Naive thymus-derived CD4-positive, alpha-beta T cell (primary cell): ENCODE measurements at regions of chr15 and their contacts with region 1.

Region 1: DNA sequence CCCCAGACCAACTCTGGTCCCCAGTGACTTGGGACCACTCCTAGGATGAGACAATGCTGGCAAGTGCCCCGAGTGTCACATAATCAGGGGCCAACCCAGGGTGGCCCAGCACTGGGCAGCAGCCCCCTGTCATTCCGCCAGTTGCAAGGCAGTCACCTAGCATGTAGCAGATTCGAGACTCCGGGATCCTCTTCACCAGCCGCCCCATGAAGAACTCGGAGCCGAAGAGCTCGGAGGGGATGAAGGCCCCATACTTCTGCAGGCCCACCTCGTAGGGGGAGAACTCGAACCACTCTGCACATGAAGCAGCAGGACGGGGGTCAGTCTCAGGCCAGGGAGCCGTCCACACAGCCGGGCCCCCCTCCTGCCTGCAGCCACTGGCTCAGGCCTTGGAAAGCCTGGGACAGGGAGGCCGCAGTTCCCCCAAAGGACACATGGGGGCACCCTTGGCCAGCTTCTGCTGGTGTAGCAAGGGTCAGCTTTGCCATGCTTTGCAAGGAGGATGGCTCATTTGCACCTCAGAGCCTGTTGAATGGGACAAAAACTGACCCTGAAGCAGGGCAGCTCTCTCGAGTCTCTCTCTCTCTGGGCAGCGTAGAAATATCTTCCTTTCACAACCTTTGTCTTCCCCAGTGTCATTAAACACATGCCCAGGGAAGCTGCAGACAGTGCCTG is 17.0 kb upstream of the EHD4 start:
- DNase-seq: peak; percentile 54 to 88 (median 74)
- ATAC-seq: peak; percentile 94
- H3K4me3 ChIP-seq: no peak overlapping the region
- H3K4me3 Mint-ChIP-seq: no peak overlapping the region
- H3K27ac ChIP-seq: no peak overlapping the region
- H3K27ac Mint-ChIP-seq: no peak overlapping the region
- H3K4me1 ChIP-seq: no peaks in the 10 kb centered on the region
- H3K4me1 Mint-ChIP-seq: peaks cover 0 to 2% (median 0%) of the 10 kb centered on the region in 7 donors
- H3K27me3 ChIP-seq: no peaks in the 10 kb centered on the region
- H3K27me3 Mint-ChIP-seq: no peaks in the 10 kb centered on the region

Region 2: DNA sequence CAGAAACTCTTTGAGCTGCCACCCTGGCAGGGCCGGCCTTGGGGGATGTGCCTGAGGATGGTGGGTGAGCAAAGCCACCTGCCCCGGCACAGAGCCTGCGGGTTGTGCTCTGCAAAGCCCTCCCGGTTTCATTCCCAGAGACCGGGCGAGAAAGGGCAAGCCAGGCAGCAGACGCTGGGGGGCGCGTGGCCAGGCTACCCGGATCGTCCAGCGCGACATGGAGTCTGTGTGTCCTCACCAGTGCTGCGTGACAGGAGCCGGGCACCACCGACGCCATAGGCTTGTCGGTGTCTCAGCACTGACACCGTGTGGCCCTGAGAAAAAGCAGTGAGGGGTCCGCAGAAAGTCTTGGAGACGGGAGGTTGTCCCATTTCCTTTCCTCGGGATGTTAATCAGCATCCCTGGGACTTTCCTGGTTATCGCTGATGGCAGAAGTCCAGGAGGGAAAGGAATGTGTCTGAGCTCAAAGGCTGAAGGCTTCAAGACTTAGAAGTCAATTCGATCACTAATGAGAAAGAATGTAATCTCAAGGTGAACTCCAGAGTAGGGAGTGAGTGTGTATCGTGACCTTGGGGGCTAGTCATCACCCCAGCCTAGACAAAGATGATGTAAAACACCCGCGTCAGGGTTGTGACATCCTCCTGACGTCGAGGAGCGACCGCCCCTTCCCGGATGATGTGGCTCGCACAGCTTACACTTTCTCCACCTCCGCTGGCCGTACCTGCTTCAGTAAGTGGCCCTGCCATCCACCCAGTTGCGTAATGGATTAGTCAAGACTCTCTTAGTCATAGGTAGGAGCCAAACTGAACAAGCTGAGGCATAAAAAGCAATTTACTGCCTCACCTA is 67.8 kb after region 1 on chr15:
- CTCF ChIA-PET with region 1: interaction called, 7 read pairs
- POLR2A ChIA-PET with region 1: no interaction called
- intact Hi-C with region 1: loop called (anchors 1 kb)
- DNase-seq: peak; percentile 19 to 56 (median 30)
- ATAC-seq: peak; percentile 81
- H3K4me3 ChIP-seq: peak overlapping the region; percentile 23
- H3K4me3 Mint-ChIP-seq: peak overlapping the region; percentile 39 to 79 (median 60)
- H3K27ac ChIP-seq: no peak overlapping the region
- H3K27ac Mint-ChIP-seq: peak overlapping the region in 4 of 9 donors; percentile 24 to 77 (median 35)
- H3K4me1 ChIP-seq: no peaks in the 10 kb centered on the region
- H3K4me1 Mint-ChIP-seq: peaks cover 3 to 17% (median 10%) of the 10 kb centered on the region in 7 donors
- H3K27me3 ChIP-seq: peaks cover 0 to 12% of the 10 kb centered on the region in 2 donors
- H3K27me3 Mint-ChIP-seq: peaks cover 11 to 59% (median 27%) of the 10 kb centered on the region in 5 donors

Region 3: DNA sequence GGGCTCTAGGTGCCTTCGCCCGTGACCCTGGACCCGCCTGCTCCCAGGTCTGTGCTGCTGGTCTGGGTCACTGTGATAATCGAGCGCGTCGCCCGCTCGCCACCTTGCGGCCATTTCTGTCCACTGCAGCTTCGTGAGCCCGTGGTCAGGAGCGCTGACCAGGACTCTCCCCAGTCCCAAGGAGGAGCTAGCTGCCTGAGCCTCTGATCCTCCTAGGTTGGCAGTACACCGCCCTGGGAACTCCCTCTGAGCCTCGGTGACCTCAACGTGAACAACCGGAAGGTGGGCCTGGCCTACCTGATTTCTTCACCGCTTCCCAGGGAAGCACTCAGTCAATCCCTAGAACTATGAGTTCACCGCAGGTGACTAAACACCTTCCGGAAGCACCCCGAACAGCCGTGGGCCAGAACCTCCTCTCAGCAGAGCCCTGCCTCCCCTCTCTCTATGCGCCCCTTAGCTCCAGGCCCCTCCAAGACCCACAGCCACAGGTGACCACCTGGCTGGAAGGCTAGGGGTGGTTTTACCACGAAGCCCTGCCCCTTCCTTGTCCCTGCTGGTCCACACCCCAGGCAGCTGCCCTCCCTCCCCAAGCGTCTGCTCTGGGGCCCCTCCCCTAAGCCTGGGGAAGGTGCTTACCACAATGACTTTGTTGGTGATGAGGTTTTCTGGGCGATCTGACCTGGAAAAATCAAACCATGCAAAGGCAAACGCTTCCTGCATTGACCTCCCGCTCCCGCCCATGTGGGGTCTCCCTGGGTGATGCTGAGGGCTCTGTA is 95.3 kb after region 1 on chr15:
- CTCF ChIA-PET with region 1: interaction called, 12 read pairs
- POLR2A ChIA-PET with region 1: no interaction called
- intact Hi-C with region 1: loop called (anchors 1 kb)
- DNase-seq: peak in 7 of 9 donors; percentile 13 to 60 (median 29)
- ATAC-seq: peak; percentile 77
- H3K4me3 ChIP-seq: no peak overlapping the region
- H3K4me3 Mint-ChIP-seq: peak overlapping the region in 4 of 10 donors; percentile 23 to 39 (median 30)
- H3K27ac ChIP-seq: no peak overlapping the region
- H3K27ac Mint-ChIP-seq: peak overlapping the region in 2 of 9 donors; percentile 5 to 16
- H3K4me1 ChIP-seq: no peaks in the 10 kb centered on the region
- H3K4me1 Mint-ChIP-seq: peaks cover 5 to 9% (median 6%) of the 10 kb centered on the region in 7 donors
- H3K27me3 ChIP-seq: no peaks in the 10 kb centered on the region
- H3K27me3 Mint-ChIP-seq: peaks cover 0 to 15% (median 11%) of the 10 kb centered on the region in 5 donors

Region 4: DNA sequence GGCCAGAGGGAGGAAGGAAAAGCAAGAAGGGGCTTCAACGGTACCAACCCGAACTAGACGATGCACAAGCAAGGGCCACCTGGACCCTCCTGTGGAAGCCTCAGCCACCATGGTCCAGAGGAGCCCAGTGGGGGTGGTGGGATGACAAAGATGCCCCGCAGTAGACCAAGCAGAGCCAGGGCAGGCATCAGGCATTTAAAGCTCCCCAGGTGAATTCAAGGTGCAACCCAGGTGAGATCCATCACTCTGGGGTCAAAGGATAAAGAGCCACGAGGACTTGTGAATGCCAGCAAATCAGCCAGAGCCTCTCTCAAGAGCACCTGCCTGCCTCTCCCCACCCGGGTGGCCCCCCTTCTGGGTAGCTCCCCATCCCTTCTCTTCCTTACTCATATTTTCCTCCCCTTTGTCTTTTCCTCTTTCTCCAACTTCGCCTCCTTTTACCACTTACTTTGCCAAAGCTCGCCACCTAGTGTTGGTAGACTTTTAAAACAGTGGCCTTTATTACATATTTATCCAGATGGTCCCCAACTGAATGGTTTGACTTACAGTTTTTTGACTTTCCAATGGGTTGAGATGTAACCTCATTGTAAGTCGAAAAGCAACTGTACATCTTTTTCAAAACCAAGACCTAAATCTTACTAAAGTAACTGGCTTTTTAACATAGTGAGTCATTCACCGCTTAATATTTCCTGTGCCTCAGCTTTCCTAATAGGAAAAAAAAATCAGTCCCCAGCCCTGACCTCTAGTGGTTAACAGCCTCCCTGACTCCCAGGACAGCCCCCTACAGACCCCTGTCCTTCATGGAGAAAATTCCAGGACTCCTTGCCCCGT is 148.2 kb after region 1 on chr15:
- CTCF ChIA-PET with region 1: no interaction called
- POLR2A ChIA-PET with region 1: no interaction called
- intact Hi-C with region 1: loop called (anchors 1 kb)
- DNase-seq: peak in 4 of 9 donors; percentile 8 to 12 (median 9)
- ATAC-seq: no peak
- H3K4me3 ChIP-seq: no peak overlapping the region
- H3K4me3 Mint-ChIP-seq: no peak overlapping the region
- H3K27ac ChIP-seq: no peak overlapping the region
- H3K27ac Mint-ChIP-seq: no peak overlapping the region
- H3K4me1 ChIP-seq: no peaks in the 10 kb centered on the region
- H3K4me1 Mint-ChIP-seq: peaks cover 0 to 7% (median 0%) of the 10 kb centered on the region in 7 donors
- H3K27me3 ChIP-seq: no peaks in the 10 kb centered on the region
- H3K27me3 Mint-ChIP-seq: peaks cover 0 to 6% (median 3%) of the 10 kb centered on the region in 5 donors

Region 5: GRCh38 chr15:42474827-42475226 is 485.4 kb after region 1 on chr15:
- CTCF ChIA-PET with region 1: interaction called, 3 read pairs
- POLR2A ChIA-PET with region 1: no interaction called
- intact Hi-C with region 1: loop called in 1 of 2 experiments (anchors 1 kb)
- DNase-seq: no peak
- ATAC-seq: no peak
- H3K4me3 ChIP-seq: no peak overlapping the region
- H3K4me3 Mint-ChIP-seq: no peak overlapping the region
- H3K27ac ChIP-seq: no peak overlapping the region
- H3K27ac Mint-ChIP-seq: peak overlapping the region in 7 of 9 donors; percentile 13 to 76 (median 54)
- H3K4me1 ChIP-seq: no peaks in the 10 kb centered on the region
- H3K4me1 Mint-ChIP-seq: peaks cover 8 to 44% (median 16%) of the 10 kb centered on the region in 7 donors
- H3K27me3 ChIP-seq: no peaks in the 10 kb centered on the region
- H3K27me3 Mint-ChIP-seq: no peaks in the 10 kb centered on the region